A673 (cell line): ENCODE measurements at regions of chr1 and their contacts with region 1.

Region 1: DNA sequence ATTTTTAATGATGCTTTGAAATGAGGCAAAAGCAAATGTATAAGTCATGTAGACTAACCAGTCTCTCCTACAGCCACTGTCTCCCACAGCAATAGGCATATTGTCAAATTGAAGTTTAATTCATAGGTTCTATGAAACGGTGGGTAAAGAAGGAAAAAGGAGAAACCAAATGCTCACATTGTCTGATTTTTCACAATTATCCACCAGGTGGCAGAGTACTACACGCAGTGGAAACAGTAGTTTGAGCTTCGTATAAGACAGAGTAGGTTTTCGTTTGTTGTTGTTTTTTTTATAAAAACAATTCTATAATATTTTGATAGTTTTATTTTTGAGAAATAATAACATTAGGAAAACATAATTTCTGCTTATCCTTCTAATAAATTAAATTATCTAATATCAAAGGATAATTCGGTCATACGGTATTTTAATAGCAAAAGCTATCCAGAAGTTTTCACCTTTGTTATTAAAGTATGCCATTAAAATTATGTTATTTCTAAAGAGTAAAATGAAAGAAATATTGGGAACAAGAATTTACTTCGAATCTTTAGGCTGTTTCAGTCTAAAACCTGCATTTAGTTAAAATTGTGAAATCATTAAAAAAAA is 39.1 kb downstream of the TYW3 start:
- DNase-seq: peak; percentile 72
- H3K4me3 ChIP-seq: no peak overlapping the region
- H3K27ac ChIP-seq: no peak overlapping the region
- H3K4me1 ChIP-seq: no peaks in the 10 kb centered on the region
- H3K27me3 ChIP-seq: peaks cover 42% of the 10 kb centered on the region
- CTCF ChIP-seq: peak; percentile 76

Region 2: DNA sequence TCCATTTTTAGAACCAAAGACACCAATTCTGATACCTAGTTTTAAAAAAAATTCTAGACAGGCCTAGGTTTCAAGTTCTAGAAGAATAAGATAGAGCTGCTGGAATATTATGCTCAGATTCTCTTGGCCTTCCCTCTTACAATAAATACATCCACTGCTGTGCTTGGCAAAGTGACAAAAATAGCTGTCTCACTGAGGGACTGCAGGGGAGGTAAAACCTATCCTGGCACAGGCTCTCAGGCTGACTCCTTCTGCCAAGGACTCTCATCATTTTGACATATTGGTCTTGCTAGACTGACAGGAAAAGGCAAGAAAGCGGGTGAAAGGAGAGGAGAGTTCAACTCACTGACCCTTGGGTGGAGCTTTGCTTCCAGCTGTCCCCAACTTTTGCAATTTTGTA is 165.2 kb after region 1 on chr1:
- CTCF ChIA-PET with region 1: no interaction called
- POLR2A ChIA-PET with region 1: no interaction called
- intact Hi-C with region 1: no loop called
- DNase-seq: no peak
- H3K4me3 ChIP-seq: no peak overlapping the region
- H3K27ac ChIP-seq: no peak overlapping the region
- H3K4me1 ChIP-seq: no peaks in the 10 kb centered on the region
- H3K27me3 ChIP-seq: no peaks in the 10 kb centered on the region
- CTCF ChIP-seq: no peak

Region 3: DNA sequence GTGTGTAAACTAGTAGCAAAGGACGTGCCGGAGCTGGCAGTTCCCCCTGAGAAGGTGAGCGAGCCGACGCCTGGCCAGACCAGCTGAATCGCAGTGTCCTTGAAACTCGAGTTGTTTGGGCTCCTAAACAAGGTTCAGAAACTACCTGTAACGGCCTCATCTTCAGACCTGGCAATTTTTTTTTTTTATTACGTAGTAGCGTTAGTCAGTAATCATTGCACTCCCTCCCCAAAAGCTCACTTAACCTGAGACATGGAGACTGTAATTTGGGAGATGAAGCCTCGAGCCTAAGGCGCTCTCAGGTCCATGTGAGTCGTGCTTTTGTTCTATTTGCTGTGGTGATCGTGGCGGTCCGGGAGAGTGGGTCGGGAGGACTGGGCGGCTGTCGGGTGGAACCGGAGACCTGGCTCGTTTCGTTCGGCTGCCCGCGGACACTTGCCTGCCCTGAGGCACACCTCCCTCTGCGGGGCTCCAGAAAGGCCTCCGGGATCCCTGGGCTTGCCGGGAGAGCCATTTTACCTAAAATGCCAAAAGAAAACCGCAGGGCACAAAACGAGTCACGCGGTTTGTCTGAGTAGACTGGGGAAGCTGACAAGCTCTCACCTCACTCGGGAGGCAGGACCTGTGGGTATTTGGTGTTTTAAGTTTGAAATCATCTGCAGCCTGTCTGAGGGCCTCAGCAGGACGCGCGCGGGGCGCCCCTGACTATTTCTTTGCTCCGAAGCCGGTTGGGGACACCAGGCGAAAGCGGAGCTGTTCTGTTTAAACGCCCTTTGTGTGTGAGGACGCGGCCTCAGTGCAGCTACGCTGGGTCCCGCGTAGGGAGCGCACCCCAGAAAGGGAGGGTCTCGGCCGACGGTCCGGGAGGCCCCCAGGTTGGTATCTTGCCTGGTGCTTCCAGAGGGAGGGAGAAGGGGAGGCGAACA is 362.9 kb after region 1 on chr1:
- CTCF ChIA-PET with region 1: interaction called, 3 read pairs
- POLR2A ChIA-PET with region 1: no interaction called
- intact Hi-C with region 1: loop called (anchors 5 kb)
- DNase-seq: peak; percentile 18
- H3K4me3 ChIP-seq: peak overlapping the region; percentile 36
- H3K27ac ChIP-seq: no peak overlapping the region
- H3K4me1 ChIP-seq: peaks cover 9% of the 10 kb centered on the region
- H3K27me3 ChIP-seq: peaks cover 100% of the 10 kb centered on the region
- CTCF ChIP-seq: no peak

Region 4: DNA sequence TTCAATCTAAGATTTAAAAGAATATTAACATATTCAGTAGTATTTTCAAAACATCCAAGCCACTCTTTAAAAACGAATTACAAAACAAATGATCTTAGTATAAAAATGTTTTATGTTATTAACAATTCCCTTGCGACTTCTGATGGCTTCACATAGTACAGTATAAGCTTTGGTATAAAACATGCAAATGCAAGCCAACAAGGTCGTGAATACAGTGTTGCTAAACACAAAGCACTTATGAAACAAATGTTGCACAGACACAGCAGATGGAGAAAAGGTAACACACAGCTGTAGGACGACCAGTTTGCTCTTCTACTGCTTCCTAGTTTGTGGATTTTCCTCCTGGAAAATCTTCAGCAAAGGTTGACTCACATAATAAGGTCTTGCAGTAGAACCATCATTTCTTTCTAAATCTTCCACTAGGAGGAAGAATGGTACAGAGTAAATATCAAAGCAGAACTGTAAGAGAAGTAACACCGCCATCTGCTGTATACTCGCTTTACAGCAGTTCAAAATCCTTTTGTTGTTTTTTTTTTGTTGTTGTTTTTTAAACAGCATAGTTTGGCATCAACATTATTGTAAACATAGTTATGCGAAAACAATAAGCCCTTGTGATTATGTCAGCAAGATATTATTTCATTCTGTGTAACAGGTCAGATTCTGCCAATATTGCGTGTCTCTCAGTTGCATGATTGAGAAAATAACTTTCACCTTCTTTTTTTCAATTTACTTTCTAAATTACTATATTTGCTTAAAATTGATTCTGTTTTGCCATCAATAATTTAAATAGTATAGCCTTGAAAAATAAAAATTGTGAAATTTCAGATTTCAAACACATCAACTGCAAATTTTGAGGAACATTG is 431.6 kb after region 1 on chr1:
- CTCF ChIA-PET with region 1: interaction called, 4 read pairs
- POLR2A ChIA-PET with region 1: no interaction called
- intact Hi-C with region 1: loop called (anchors 1 kb)
- DNase-seq: peak; percentile 51
- H3K4me3 ChIP-seq: no peak overlapping the region
- H3K27ac ChIP-seq: no peak overlapping the region
- H3K4me1 ChIP-seq: no peaks in the 10 kb centered on the region
- H3K27me3 ChIP-seq: peaks cover 45% of the 10 kb centered on the region
- CTCF ChIP-seq: peak; percentile 84